ENCODE measurements at regions of chr2 and their contacts with region 1.

Region 1: GRCh38 chr2:47906157-47907038 is at the start of gene FBXO11:
- DNase-seq: peak; percentile 99
- H3K4me3 ChIP-seq: peak within 1 kb of the TSS; percentile 87 to 99 (median 88)
- H3K27ac ChIP-seq: peak within 1 kb of the TSS; percentile 90
- H3K4me1 ChIP-seq: peaks cover 20% of the 10 kb centered on the region
- H3K27me3 ChIP-seq: no peaks in the 10 kb centered on the region
- CTCF ChIP-seq: peak; percentile 51 to 65
- POLR2A ChIP-seq: peak; percentile 63
- total RNA-seq, gene FBXO11: 59.6 and 65.0 TPM in 2 replicates

Region 2: GRCh38 chr2:47782671-47783485 is 123.5 kb before region 1 on chr2 and contains the start of gene MSH6:
- CTCF ChIA-PET with region 1: no interaction called
- POLR2A ChIA-PET with region 1: no interaction called
- dilution Hi-C with region 1: no loop called
- intact Hi-C with region 1: loop called (anchors 2 kb)
- DNase-seq: peak; percentile 90
- H3K4me3 ChIP-seq: peak within 1 kb of the TSS; percentile 64 to 92 (median 89)
- H3K27ac ChIP-seq: peak within 1 kb of the TSS; percentile 77
- H3K4me1 ChIP-seq: peaks cover 9% of the 10 kb centered on the region
- H3K27me3 ChIP-seq: no peaks in the 10 kb centered on the region
- CTCF ChIP-seq: no peak
- POLR2A ChIP-seq: peak; percentile 71
- total RNA-seq, gene MSH6: 59.3 and 74.0 TPM in 2 replicates

Region 3: DNA sequence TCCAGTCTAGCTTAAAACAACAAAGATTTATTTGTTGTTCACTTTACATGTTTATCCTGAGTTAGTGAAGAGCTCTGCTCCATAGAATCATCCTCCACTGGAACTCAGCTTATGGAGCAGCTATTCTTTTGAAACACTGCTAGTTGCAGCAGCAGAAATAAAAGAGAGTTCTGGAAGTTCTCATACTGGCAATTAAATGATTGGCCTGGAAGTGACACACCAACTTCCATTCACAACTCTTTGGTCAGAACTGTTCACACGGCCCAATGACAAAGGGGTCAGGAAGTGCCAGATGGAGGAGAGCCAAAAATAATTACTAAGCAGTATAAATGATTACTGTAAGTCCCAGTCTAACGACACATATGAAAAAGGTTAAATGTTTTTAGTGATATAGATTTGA is 39.2 kb before region 1 on chr2:
- CTCF ChIA-PET with region 1: interaction called, 3 read pairs
- POLR2A ChIA-PET with region 1: no interaction called
- dilution Hi-C with region 1: no loop called
- intact Hi-C with region 1: loop called (anchors 1 kb)
- DNase-seq: peak; percentile 97
- H3K4me3 ChIP-seq: peak overlapping the region in 1 of 3 experiments; percentile 27
- H3K27ac ChIP-seq: peak overlapping the region; percentile 85
- H3K4me1 ChIP-seq: peaks cover 32% of the 10 kb centered on the region
- H3K27me3 ChIP-seq: no peaks in the 10 kb centered on the region
- CTCF ChIP-seq: no peak
- POLR2A ChIP-seq: peak; percentile 34

Region 4: GRCh38 chr2:47917276-47917961 is 11.0 kb after region 1 on chr2:
- CTCF ChIA-PET with region 1: interaction called, 10 read pairs
- POLR2A ChIA-PET with region 1: no interaction called
- dilution Hi-C with region 1: no loop called
- intact Hi-C with region 1: no loop called
- DNase-seq: no peak
- H3K4me3 ChIP-seq: no peak overlapping the region
- H3K27ac ChIP-seq: no peak overlapping the region
- H3K4me1 ChIP-seq: no peaks in the 10 kb centered on the region
- H3K27me3 ChIP-seq: peaks cover 0 to 3% of the 10 kb centered on the region in 2 experiments
- CTCF ChIP-seq: no peak
- POLR2A ChIP-seq: no peak

Region 5: DNA sequence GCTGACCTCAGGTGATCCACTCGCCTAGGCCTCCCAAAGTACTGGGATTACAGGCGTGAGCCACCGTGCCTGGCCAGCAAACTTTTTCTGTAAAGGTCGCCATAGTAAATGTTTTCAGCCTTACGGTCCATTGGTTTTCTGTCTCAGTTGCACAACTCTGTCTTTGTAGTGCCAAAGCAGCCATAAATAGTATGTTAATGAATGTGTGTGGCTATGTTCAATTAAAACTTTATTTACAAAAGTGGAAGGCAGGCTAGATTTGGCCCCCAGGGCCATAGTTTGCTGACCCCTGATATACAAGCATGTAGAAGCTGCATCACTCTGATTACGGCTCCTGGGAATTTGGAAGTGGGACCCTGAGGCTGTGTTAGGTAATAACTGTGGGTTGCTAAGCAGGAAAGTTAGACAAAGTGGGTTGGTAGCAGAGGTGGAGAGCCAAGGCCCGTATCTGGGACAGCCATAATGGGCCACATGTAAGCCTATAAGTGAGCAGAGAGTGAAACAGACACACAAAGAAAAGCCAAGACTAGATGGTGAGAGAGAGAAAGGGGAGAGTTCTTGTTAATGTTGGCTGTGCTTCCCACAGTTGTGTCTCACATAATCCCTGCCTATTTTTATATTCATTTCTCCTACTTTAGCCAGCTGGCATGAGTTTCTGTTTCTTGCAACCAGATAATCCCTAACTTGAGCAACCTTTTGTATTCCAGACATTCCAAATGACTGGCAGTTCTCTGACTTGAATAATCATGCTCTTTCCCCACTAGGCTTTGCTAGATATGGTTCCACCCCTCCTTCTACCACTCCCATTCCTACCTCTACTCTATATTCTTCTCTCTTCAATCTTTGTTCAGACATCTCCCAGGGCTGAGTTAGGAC is 400.2 kb after region 1 on chr2:
- CTCF ChIA-PET with region 1: no interaction called
- POLR2A ChIA-PET with region 1: no interaction called
- dilution Hi-C with region 1: no loop called
- intact Hi-C with region 1: no loop called
- DNase-seq: no peak
- H3K4me3 ChIP-seq: no peak overlapping the region
- H3K27ac ChIP-seq: no peak overlapping the region
- H3K4me1 ChIP-seq: no peaks in the 10 kb centered on the region
- H3K27me3 ChIP-seq: no peaks in the 10 kb centered on the region
- CTCF ChIP-seq: no peak
- POLR2A ChIP-seq: no peak

Region 6: GRCh38 chr2:48343571-48344440 is 437.4 kb after region 1 on chr2:
- CTCF ChIA-PET with region 1: no interaction called
- POLR2A ChIA-PET with region 1: no interaction called
- dilution Hi-C with region 1: no loop called
- intact Hi-C with region 1: loop called (anchors 10 kb)
- DNase-seq: peak; percentile 91
- H3K4me3 ChIP-seq: peak overlapping the region; percentile 2 to 87 (median 69)
- H3K27ac ChIP-seq: peak overlapping the region; percentile 86
- H3K4me1 ChIP-seq: peaks cover 41% of the 10 kb centered on the region
- H3K27me3 ChIP-seq: no peaks in the 10 kb centered on the region
- CTCF ChIP-seq: no peak
- POLR2A ChIP-seq: no peak

Region 7: GRCh38 chr2:48420512-48421197 is 514.3 kb after region 1 on chr2:
- CTCF ChIA-PET with region 1: no interaction called
- POLR2A ChIA-PET with region 1: no interaction called
- dilution Hi-C with region 1: no loop called
- intact Hi-C with region 1: loop called (anchors 1 kb)
- DNase-seq: peak; percentile 85
- H3K4me3 ChIP-seq: peak overlapping the region in 1 of 3 experiments; percentile 8
- H3K27ac ChIP-seq: peak overlapping the region; percentile 39
- H3K4me1 ChIP-seq: peaks cover 5% of the 10 kb centered on the region
- H3K27me3 ChIP-seq: no peaks in the 10 kb centered on the region
- CTCF ChIP-seq: peak; percentile 88 to 93
- POLR2A ChIP-seq: no peak

Region 8: GRCh38 chr2:48589170-48589767 is 682.9 kb after region 1 on chr2:
- CTCF ChIA-PET with region 1: no interaction called
- POLR2A ChIA-PET with region 1: no interaction called
- dilution Hi-C with region 1: no loop called
- intact Hi-C with region 1: loop called (anchors 2 kb)
- DNase-seq: peak; percentile 72
- H3K4me3 ChIP-seq: no peak overlapping the region
- H3K27ac ChIP-seq: no peak overlapping the region
- H3K4me1 ChIP-seq: no peaks in the 10 kb centered on the region
- H3K27me3 ChIP-seq: no peaks in the 10 kb centered on the region
- CTCF ChIP-seq: peak; percentile 71
- POLR2A ChIP-seq: no peak